HEK293T (cell line): ENCODE measurements at regions of chr14 and their contacts with region 1.

Region 1: GRCh38 chr14:75307700-75308379 is 29.2 kb downstream of the FOS start:
- DNase-seq: peak; percentile 75

Region 2: DNA sequence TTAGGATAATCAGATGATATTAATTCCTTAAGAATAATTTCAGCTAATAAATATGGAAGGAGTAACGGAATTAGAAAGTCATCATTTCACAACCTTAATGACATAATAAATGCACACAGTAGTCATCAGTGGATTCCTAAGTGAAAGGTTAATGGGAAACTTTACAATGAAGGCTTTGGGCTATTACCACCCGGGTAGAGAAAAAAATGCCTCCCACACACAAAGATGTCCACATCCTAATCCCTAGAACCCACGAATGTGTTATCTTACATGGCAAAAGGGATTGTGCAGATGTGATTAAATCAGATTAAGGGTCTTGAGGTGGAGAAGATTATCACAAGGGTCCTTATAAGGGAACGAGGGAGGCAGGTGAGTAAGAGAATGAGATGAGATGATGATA is 137.1 kb before region 1 on chr14:
- CTCF ChIA-PET with region 1: no interaction called
- POLR2A ChIA-PET with region 1: no interaction called
- DNase-seq: no peak

Region 3: DNA sequence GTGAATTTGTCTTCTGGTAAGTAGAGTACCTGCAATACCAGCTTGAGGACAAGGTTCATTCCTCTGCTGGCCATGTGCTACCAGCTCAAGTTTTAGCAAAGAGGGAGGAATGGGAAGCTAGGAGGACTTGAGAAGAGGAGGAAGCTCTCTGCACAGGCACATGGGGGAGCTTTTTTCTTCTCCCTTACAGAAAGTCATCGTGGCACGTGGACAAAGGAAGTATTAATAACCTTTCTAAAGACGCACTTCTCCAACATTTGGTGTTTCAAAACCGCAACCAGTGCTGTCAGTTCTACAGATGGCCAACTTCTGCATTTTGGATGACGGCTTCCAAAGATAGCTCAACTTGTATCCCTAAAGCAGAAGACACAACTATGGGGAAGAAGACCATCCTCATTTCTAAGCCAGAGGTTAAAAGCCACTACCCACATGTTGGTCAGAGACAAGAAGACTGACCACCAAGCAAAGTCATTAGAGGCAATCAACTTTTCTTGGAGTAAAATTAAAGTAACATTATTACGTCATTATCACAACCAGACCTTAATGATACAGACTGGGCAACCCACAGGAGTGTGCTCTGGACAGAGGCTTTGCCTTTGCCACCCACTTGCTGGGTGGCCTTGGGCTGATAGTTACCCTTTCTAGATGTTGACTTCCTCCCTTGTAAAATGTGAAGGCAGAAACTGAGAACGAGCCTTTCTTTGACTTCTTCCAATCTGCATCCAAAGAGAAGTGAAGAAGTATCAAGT is 119.1 kb before region 1 on chr14:
- CTCF ChIA-PET with region 1: no interaction called
- POLR2A ChIA-PET with region 1: no interaction called
- DNase-seq: no peak

Region 4: GRCh38 chr14:75328558-75329155 is 20.8 kb after region 1 on chr14:
- CTCF ChIA-PET with region 1: no interaction called
- POLR2A ChIA-PET with region 1: no interaction called
- DNase-seq: no peak

Region 5: GRCh38 chr14:75487155-75487671 is 179.4 kb after region 1 on chr14:
- CTCF ChIA-PET with region 1: interaction called, 48 read pairs
- POLR2A ChIA-PET with region 1: no interaction called
- DNase-seq: no peak